ENCODE measurements at regions of chr6 and their contacts with region 1.

Region 1: DNA sequence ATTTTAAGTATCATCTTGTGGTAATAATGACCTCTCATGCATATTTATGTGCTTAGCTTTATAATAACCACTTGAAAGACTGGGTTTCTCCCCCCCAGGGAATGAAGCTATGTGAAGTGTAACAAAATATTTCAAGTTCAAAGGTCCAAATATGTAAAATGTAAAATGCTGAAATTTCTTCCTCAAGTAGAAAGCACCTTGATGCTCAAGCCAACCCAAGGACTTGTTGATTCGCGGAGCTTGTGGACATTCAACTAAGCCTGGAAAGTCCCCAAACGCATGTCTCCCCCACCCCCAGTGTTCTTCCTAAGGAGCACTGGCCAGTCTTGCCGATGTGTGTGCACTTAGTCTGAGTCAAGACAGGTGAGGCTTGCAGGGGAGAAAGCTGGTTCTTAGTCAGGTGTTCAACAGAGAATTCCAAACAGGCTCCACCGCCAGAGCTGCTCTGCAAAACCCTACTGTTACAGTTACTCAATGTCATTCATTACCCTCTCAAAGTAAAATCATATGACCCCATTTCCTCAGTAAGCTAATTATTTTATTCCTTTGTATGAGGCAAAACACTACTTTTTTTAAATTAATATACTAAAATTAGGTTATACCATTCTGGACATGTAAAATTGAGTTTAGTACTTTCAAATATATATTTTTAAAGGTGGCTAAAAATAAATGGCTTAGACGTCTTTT is 46.9 kb upstream of the QKI start:
- DNase-seq: no peak
- ATAC-seq: no peak
- H3K4me3 ChIP-seq: no peak overlapping the region
- H3K27ac ChIP-seq: no peak overlapping the region
- H3K4me1 ChIP-seq: no peaks in the 10 kb centered on the region
- H3K27me3 ChIP-seq: no peaks in the 10 kb centered on the region; a peak in 1 of 4 replicates
- CTCF ChIP-seq: no peak
- EP300 ChIP-seq: no peak
- POLR2A ChIP-seq: no peak
- RAD21 ChIP-seq: no peak

Region 2: DNA sequence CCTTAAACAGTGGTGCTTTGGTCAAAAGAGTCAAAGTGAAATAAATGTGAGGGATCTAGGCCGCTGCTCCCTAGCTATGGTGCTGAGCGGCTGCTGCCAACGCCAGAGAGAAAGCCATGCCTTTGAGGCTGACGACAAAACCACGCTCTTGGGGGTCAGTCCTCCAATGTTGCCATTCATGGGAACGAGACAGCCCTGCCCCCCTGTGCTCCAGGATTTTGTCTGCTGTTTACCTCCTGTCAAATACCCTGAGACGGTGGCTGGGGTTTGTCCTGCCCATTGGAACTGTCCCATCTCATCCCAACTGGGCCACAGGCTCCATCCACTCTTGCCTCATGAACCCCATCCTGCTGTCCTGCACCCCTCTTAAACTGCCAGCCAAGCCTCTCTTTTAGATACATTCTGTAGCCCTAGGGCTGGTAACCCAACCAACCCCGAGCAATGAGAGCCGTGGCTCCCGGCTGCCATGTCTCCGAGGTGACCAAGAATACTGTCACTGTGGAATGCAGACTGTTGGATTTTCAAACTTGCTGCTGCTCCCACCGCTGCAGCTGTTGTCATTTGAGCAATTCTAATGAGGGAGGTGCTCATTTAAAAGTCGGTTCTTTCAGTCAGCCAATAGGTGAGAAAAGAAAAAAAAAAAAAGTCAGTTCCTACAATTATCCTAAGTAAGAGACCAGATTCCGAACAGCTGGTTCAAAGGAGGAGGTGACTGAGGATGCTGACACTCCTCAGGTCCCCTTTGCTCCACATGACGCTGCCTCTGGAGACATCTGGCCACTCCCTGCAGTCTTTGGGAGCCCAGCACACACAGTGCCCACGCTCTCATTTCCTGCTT is 26.2 kb before region 1 on chr6:
- CTCF ChIA-PET with region 1: no interaction called
- POLR2A ChIA-PET with region 1: no interaction called
- RAD21 ChIA-PET with region 1: no interaction called
- SMC1A ChIA-PET with region 1: interaction called, 3 read pairs
- in situ Hi-C with region 1: no loop called
- intact Hi-C with region 1: loop called (anchors 1 kb)
- DNase-seq: no peak
- ATAC-seq: no peak
- H3K4me3 ChIP-seq: no peak overlapping the region
- H3K27ac ChIP-seq: no peak overlapping the region
- H3K4me1 ChIP-seq: no peaks in the 10 kb centered on the region
- H3K27me3 ChIP-seq: no peaks in the 10 kb centered on the region; a peak in 1 of 4 replicates
- CTCF ChIP-seq: no peak
- EP300 ChIP-seq: no peak
- POLR2A ChIP-seq: no peak
- RAD21 ChIP-seq: no peak

Region 3: GRCh38 chr6:163383912-163384311 is 16.3 kb after region 1 on chr6:
- CTCF ChIA-PET with region 1: no interaction called
- POLR2A ChIA-PET with region 1: no interaction called
- RAD21 ChIA-PET with region 1: no interaction called
- SMC1A ChIA-PET with region 1: no interaction called
- in situ Hi-C with region 1: no loop called
- intact Hi-C with region 1: no loop called
- DNase-seq: no peak
- ATAC-seq: no peak
- H3K4me3 ChIP-seq: no peak overlapping the region
- H3K27ac ChIP-seq: no peak overlapping the region
- H3K4me1 ChIP-seq: no peaks in the 10 kb centered on the region
- H3K27me3 ChIP-seq: no peaks in the 10 kb centered on the region; a peak in 1 of 4 replicates
- CTCF ChIP-seq: no peak
- EP300 ChIP-seq: no peak
- POLR2A ChIP-seq: no peak
- RAD21 ChIP-seq: no peak